Activated naive CD4-positive, alpha-beta T cell treated with anti-CD3 and anti-CD28 coated beads for 36 hours (primary cell): ENCODE measurements at regions of chr3 and their contacts with region 1.

Region 1: GRCh38 chr3:105518806-105519418 is 152.2 kb downstream of the ALCAM start:
- DNase-seq: peak; percentile 30
- H3K4me3 Mint-ChIP-seq: no peak overlapping the region
- H3K27ac Mint-ChIP-seq: no peak overlapping the region
- H3K4me1 Mint-ChIP-seq: no peaks in the 10 kb centered on the region
- H3K27me3 Mint-ChIP-seq: no peaks in the 10 kb centered on the region

Region 2: GRCh38 chr3:104102386-104102785 is 1416.5 kb before region 1 on chr3:
- CTCF ChIA-PET with region 1: no interaction called
- intact Hi-C with region 1: loop called (anchors 5 kb)
- DNase-seq: peak; percentile 7
- H3K4me3 Mint-ChIP-seq: no peak overlapping the region
- H3K27ac Mint-ChIP-seq: no peak overlapping the region
- H3K4me1 Mint-ChIP-seq: no peaks in the 10 kb centered on the region
- H3K27me3 Mint-ChIP-seq: no peaks in the 10 kb centered on the region

Region 3: DNA sequence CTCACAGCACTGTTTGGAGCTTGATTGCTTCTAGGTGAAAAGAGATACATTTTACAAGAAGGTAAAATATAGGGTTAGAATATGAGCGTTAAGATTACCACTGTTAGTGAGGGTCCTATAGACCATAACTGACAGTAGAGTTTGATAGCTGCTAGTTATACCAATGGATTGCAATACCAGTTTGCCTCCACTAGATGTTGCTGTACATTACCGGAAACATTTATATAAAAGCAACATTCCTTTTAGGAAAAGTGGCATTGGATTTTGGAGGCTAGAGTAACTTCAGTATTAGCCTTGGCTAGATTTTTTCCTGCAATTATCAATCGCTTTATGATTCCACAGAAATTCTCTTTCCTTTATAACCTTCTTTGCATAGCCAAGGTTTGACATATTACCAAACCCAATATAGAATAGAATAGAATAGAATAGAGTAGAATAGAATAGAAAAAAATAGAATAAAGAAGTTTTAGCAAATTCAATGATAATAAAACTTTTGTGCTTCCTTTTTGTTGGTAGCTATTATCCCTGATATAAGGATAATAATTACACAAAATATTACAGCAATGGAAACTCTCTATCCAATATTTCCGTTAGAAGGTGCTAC is 1245.8 kb before region 1 on chr3:
- CTCF ChIA-PET with region 1: no interaction called
- intact Hi-C with region 1: loop called (anchors 5 kb)
- DNase-seq: no peak
- H3K4me3 Mint-ChIP-seq: no peak overlapping the region
- H3K27ac Mint-ChIP-seq: no peak overlapping the region
- H3K4me1 Mint-ChIP-seq: no peaks in the 10 kb centered on the region
- H3K27me3 Mint-ChIP-seq: no peaks in the 10 kb centered on the region

Region 4: GRCh38 chr3:104564045-104564643 is 954.8 kb before region 1 on chr3:
- CTCF ChIA-PET with region 1: no interaction called
- intact Hi-C with region 1: loop called (anchors 1 kb)
- DNase-seq: peak; percentile 84
- H3K4me3 Mint-ChIP-seq: no peak overlapping the region
- H3K27ac Mint-ChIP-seq: no peak overlapping the region
- H3K4me1 Mint-ChIP-seq: no peaks in the 10 kb centered on the region
- H3K27me3 Mint-ChIP-seq: peaks cover 8% of the 10 kb centered on the region

Region 5: GRCh38 chr3:104596551-104596950 is 922.4 kb before region 1 on chr3:
- CTCF ChIA-PET with region 1: interaction called, 5 read pairs
- intact Hi-C with region 1: loop called (anchors 2 kb)
- DNase-seq: peak; percentile 9
- H3K4me3 Mint-ChIP-seq: no peak overlapping the region
- H3K27ac Mint-ChIP-seq: no peak overlapping the region
- H3K4me1 Mint-ChIP-seq: peaks cover 4% of the 10 kb centered on the region
- H3K27me3 Mint-ChIP-seq: no peaks in the 10 kb centered on the region

Region 6: DNA sequence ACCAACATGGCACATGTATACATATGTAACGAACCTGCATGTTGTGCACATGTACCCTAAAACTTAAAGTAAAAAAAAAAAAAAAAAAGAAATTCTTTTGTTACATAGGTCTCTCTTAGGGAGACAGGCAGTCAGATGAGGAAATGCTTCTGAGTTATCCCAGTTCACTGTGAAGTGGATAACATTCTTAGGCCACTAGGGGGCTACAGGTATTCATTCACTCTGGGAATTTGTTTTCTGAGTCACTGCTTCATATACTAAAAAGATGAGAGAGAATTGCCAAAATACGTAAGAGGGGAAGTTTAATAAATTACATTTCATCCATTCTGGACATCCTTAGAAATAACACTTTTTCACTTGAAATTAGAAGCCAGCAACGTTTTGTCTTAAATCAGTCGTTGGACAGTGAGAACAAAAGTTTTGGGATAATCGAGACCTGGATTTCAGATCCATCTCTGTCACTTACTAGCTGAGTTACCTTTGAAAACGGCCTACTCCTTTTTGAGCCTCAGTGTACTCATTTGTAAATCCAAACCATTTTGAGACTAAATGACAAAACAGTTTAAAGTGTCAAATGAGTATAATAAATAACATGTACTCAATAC is 890.6 kb before region 1 on chr3:
- CTCF ChIA-PET with region 1: no interaction called
- intact Hi-C with region 1: loop called (anchors 1 kb)
- DNase-seq: no peak
- H3K4me3 Mint-ChIP-seq: no peak overlapping the region
- H3K27ac Mint-ChIP-seq: no peak overlapping the region
- H3K4me1 Mint-ChIP-seq: no peaks in the 10 kb centered on the region
- H3K27me3 Mint-ChIP-seq: peaks cover 5% of the 10 kb centered on the region

Region 7: GRCh38 chr3:104669083-104669482 is 849.8 kb before region 1 on chr3:
- CTCF ChIA-PET with region 1: no interaction called
- intact Hi-C with region 1: no loop called
- DNase-seq: no peak
- H3K4me3 Mint-ChIP-seq: no peak overlapping the region
- H3K27ac Mint-ChIP-seq: no peak overlapping the region
- H3K4me1 Mint-ChIP-seq: no peaks in the 10 kb centered on the region
- H3K27me3 Mint-ChIP-seq: no peaks in the 10 kb centered on the region

Region 8: GRCh38 chr3:105497386-105497785 is 21.5 kb before region 1 on chr3:
- CTCF ChIA-PET with region 1: no interaction called
- intact Hi-C with region 1: no loop called
- DNase-seq: no peak
- H3K4me3 Mint-ChIP-seq: no peak overlapping the region
- H3K27ac Mint-ChIP-seq: no peak overlapping the region
- H3K4me1 Mint-ChIP-seq: no peaks in the 10 kb centered on the region
- H3K27me3 Mint-ChIP-seq: no peaks in the 10 kb centered on the region

Region 9: GRCh38 chr3:107064445-107065060 is 1545.6 kb after region 1 on chr3:
- CTCF ChIA-PET with region 1: no interaction called
- intact Hi-C with region 1: loop called (anchors 1 kb)
- DNase-seq: peak; percentile 85
- H3K4me3 Mint-ChIP-seq: no peak overlapping the region
- H3K27ac Mint-ChIP-seq: no peak overlapping the region
- H3K4me1 Mint-ChIP-seq: peaks cover 14% of the 10 kb centered on the region
- H3K27me3 Mint-ChIP-seq: peaks cover 7% of the 10 kb centered on the region